ENCODE measurements at regions of chr2 and their contacts with region 1.

Region 1: DNA sequence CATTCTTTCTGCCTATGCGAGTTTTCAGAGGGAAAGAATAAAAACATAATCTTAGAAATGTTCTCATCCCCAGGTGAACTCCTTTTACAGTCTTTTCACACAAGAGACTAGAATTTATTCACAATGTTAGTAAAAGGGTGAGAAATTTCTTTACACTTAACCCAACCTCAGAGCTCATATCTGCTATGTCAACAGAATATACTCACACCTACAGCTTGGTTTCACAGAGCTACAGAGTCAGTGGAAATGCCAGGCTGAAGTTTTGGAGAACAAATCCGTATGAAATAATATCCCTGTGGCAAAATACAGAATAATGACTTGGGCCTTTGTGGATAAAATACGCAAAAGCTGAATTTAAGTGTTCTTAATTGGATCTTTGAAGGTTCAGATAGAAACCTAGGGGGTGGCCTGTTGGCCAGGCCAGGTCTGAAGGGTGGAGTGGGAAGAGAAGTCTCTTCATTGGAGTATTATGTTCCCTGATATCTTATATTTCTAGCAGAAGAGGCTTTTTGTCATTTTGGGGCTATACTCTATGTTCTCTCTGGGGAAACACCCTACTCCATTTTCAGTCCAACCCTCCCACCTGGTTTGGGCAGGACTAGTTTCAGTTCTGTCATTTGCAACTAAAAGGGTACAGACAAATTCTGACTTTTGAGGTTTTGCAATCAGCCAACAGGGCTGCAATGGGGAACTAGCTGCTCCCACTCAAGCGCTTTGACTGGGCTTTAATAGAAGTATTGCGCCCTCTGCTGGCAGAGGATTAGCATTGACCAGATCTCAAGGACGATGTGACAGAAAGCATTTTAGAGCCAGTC is 25.7 kb downstream of the FBXO48 start:
- DNase-seq: peak; percentile 75
- H3K4me3 Mint-ChIP-seq: no peak overlapping the region
- H3K27ac Mint-ChIP-seq: no peak overlapping the region
- H3K4me1 Mint-ChIP-seq: no peaks in the 10 kb centered on the region
- H3K27me3 Mint-ChIP-seq: peaks cover 20% of the 10 kb centered on the region
- CTCF ChIP-seq: peak; percentile 77

Region 2: DNA sequence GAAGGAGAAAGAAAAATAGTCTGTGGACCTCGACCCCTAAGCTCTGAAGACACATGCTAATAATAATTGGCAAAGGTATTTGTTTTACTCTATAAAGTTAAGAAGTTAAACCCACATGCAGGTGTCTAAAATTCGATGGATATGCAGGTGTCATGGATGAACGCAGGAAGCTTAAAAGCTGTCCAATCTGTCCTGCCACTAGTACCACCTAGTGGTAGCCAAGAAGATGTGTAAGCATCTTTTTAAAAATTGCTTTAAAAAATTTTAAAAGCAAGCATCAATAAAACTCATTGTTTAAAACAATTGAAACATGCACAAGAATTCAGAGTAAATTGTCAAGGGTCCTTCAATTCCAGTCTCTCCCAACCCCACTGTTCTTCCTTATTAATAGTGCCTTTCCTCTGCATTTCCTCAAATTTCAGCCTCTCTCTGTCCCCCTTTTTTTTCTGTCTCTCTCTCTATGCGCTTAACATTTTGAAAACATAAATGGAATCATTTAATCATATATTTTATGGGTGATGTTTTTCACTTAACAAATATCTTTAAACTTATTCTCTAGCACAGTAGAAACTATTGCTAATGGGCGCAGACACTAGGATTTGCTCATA is 158.5 kb before region 1 on chr2:
- CTCF ChIA-PET with region 1: interaction called, 5 read pairs
- intact Hi-C with region 1: loop called (anchors 10 kb)
- DNase-seq: peak; percentile 16
- H3K4me3 Mint-ChIP-seq: no peak overlapping the region
- H3K27ac Mint-ChIP-seq: no peak overlapping the region
- H3K4me1 Mint-ChIP-seq: no peaks in the 10 kb centered on the region
- H3K27me3 Mint-ChIP-seq: peaks cover 45% of the 10 kb centered on the region
- CTCF ChIP-seq: peak; percentile 66

Region 3: GRCh38 chr2:68362069-68362468 is 79.3 kb before region 1 on chr2:
- CTCF ChIA-PET with region 1: no interaction called
- intact Hi-C with region 1: loop called (anchors 5 kb)
- DNase-seq: peak; percentile 72
- H3K4me3 Mint-ChIP-seq: no peak overlapping the region
- H3K27ac Mint-ChIP-seq: no peak overlapping the region
- H3K4me1 Mint-ChIP-seq: no peaks in the 10 kb centered on the region
- H3K27me3 Mint-ChIP-seq: no peaks in the 10 kb centered on the region
- CTCF ChIP-seq: peak; percentile 68